Right cardiac atrium (tissue), 5 donors: ENCODE measurements at regions of chr1 and their contacts with region 1.

Region 1: DNA sequence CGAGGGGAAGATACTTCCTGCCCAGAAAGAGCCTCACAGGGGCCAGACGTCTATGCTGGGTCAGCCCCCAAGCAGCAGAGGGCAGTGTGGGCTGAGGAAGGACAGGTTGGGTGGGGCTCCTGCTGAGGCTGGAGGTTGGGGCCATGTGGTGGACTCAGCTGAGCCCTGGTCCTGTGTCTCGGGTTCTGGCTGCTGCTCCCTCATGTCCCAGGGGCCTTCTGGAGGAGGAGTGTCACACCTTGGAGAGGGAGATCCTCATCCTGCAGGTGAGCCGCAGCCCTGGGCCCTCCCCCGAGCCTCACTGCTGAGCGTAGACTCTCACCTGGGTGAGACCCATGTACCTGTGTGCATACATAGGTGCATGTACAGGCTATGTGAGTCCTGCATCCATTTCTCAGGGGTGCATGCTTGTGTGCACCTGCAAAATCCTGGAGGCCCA is 3.5 kb downstream of the CCDC24 start:
- DNase-seq: peak in 1 of 3 donors; percentile 43
- ATAC-seq: no peak
- H3K4me3 ChIP-seq: no peak overlapping the region
- H3K27ac ChIP-seq: no peak overlapping the region
- H3K4me1 ChIP-seq: no peaks in the 10 kb centered on the region
- H3K27me3 ChIP-seq: no peaks in the 10 kb centered on the region

Region 2: DNA sequence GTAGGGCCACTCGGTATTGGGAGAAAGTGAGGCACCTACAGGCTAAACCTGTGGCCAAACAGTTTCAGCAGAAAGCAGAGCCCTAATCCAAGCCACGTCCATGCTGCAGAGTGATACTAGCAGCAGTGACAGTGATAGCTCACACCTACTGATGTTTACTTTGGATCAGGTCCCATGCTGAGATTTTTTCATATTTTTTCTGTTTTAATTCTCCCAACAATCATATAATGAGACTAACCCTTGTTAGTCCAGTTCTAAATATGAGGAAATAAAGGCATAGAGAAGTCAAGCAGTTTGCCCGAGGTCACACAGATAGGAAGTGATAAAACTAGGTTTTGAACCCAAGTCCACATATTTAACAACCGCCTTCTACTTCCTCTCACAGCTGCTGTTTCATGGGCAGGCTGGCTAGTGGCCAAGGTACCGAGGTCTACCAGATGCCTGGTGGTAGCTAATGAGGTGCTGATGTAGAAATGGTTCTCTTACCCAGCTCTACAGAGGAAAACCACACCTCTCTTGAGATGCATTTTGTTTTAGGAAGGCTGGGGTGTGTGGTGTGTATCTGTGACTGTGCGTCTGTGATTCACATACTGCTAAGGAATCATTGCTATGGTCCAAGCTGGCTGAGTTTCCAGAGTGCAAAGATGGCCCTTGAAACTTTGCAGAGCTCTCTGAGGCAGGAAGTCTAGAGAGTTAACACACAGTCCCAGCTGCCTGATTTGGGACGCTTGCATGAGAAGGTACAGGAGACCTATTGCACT is 141.6 kb before region 1 on chr1:
- intact Hi-C with region 1: no loop called
- DNase-seq: peak; percentile 53 to 84 (median 67)
- ATAC-seq: peak; percentile 34 to 57
- H3K4me3 ChIP-seq: no peak overlapping the region
- H3K27ac ChIP-seq: peak overlapping the region; percentile 14
- H3K4me1 ChIP-seq: peaks cover 3% of the 10 kb centered on the region
- H3K27me3 ChIP-seq: no peaks in the 10 kb centered on the region

Region 3: DNA sequence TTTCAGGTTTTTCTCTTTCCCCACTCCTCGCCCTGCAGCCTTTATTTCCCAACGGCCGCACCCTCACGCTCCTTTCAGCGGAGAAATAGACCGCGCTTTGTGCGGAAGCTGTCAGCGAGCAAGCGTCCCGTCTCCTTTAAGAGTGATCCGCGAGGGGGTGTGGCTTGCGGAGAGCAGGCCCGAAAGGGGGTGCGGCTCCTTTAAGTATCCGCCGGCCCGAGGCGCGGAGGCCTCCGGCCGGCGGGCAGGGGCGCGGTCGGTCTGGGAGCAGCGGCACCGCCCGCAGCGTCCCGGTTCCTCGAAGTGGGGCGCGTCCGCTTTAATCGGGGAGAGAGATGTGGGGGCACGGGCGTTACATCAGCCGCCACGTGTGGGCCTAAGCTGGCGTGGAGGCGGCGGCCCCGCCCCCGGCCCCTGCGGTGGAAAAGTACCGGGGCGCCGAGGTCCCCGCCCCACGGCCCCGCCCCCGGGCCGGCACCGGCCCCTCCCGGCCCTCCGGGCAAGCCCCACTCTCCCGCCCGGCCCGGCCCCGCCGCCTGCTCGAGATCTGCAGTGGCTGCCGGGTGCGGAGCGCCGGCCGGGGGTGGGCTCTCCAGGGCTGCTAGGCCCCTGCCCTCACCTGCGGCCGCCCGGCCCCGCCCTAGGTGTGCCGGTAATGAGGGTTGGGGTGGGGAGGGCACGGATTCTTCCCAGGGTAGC is 35.1 kb after region 1 on chr1:
- intact Hi-C with region 1: loop called in 2 of 4 experiments (anchors 5 kb)
- DNase-seq: peak; percentile 92 to 96 (median 94)
- ATAC-seq: peak; percentile 91 to 93
- H3K4me3 ChIP-seq: peak overlapping the region; percentile 74
- H3K27ac ChIP-seq: peak overlapping the region; percentile 41
- H3K4me1 ChIP-seq: peaks cover 1% of the 10 kb centered on the region
- H3K27me3 ChIP-seq: no peaks in the 10 kb centered on the region

Region 4: DNA sequence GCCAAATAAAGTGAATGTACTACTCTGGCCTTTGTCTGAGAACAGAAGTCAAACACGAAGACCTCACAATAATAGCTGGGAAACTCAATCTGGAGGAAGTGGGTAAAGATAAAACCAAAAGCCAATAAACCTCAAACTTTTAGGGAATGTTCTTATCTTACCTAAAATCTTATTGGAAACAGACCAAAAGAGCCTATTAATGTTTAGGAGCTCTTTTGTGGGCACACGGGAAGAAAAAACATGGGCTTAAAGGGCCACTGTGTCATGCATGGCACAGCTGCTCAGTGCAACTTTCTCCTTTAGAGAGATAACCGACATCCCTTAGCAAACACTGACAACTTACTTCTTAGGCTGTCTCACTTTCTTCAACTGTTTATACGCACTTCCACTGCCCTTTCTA is 975.4 kb after region 1 on chr1:
- intact Hi-C with region 1: no loop called
- DNase-seq: no peak
- ATAC-seq: peak in 1 of 2 donors; percentile 58
- H3K4me3 ChIP-seq: no peak overlapping the region
- H3K27ac ChIP-seq: no peak overlapping the region
- H3K4me1 ChIP-seq: no peaks in the 10 kb centered on the region
- H3K27me3 ChIP-seq: no peaks in the 10 kb centered on the region